Activated CD4-positive, alpha-beta memory T cell treated with anti-CD3 and anti-CD28 coated beads for 36 hours (primary cell): ENCODE measurements at regions of chr7 and their contacts with region 1.

Region 1: GRCh38 chr7:129298268-129298893 is 73.6 kb downstream of the AHCYL2 start:
- DNase-seq: peak; percentile 62
- H3K4me3 Mint-ChIP-seq: no peak overlapping the region
- H3K27ac Mint-ChIP-seq: no peak overlapping the region
- H3K4me1 Mint-ChIP-seq: peaks cover 2% of the 10 kb centered on the region
- H3K27me3 Mint-ChIP-seq: no peaks in the 10 kb centered on the region

Region 2: DNA sequence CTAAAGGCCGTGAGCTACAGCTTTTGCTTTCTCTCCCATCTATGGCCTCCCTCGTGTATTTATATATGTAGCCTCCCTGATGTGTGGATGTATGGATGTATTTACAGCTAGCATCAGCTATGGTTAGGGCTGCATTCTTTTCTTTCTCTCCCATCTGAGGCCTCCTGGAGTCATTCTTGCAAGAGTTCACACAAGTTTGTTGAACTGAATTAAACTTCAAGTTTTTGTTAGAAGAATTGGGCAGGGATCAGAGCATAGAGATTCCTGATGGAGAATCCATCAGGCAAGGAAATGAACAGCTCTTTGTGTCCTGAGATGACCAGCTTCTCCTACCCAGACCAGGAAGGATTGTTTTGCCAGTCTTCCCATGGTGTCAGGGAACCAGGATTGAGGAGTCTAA is 13.3 kb before region 1 on chr7:
- CTCF ChIA-PET with region 1: interaction called, 26 read pairs
- POLR2A ChIA-PET with region 1: no interaction called
- intact Hi-C with region 1: no loop called
- DNase-seq: no peak
- H3K4me3 Mint-ChIP-seq: no peak overlapping the region
- H3K27ac Mint-ChIP-seq: no peak overlapping the region
- H3K4me1 Mint-ChIP-seq: no peaks in the 10 kb centered on the region
- H3K27me3 Mint-ChIP-seq: no peaks in the 10 kb centered on the region